B cell (primary cell): ENCODE measurements at regions of chr6 and their contacts with region 1.

Region 1: GRCh38 chr6:122839477-122839876 is 50.4 kb downstream of the SMPDL3A start:
- DNase-seq: peak; percentile 54
- ATAC-seq: peak; percentile 62
- H3K4me3 ChIP-seq: no peak overlapping the region
- H3K4me3 Mint-ChIP-seq: no peak overlapping the region
- H3K27ac ChIP-seq: no peak overlapping the region
- H3K27ac Mint-ChIP-seq: no peak overlapping the region
- H3K4me1 ChIP-seq: no peaks in the 10 kb centered on the region
- H3K4me1 Mint-ChIP-seq: no peaks in the 10 kb centered on the region
- H3K27me3 ChIP-seq: no peaks in the 10 kb centered on the region
- H3K27me3 Mint-ChIP-seq: peaks cover 16% of the 10 kb centered on the region
- CTCF ChIP-seq: peak; percentile 61

Region 2: DNA sequence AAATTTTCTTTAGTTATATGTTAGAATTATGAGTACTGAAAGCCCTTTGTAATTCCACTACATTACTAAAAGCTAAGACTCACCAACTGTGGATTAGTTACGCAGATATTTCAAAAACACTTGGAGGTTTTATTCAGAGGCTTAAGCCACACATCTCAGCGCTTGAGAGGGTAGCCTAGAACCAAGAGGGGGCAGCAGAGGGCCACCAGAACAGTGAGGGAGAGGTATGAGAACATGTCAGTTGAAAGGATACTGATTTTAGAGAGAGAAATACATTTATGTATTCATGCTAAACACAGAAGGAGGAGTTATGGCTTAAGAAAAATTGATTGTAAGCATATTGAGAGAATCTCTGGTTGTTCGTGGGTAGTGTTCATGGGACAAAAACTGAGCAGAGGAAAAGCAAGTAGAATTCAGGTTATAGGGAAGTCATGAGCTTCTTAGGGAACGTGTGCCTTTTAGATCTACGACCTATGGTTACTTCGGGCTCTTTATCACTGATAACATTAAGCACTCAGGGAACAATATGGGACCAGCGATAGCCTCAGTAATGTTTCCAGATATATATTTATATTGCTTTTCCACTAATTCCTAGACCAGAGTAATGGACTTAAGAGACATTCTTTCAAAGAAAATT is 347.4 kb before region 1 on chr6:
- CTCF ChIA-PET with region 1: interaction called, 11 read pairs
- POLR2A ChIA-PET with region 1: no interaction called
- intact Hi-C with region 1: loop called (anchors 5 kb)
- DNase-seq: peak; percentile 72
- ATAC-seq: peak; percentile 93
- H3K4me3 ChIP-seq: no peak overlapping the region
- H3K4me3 Mint-ChIP-seq: peak overlapping the region; percentile 2
- H3K27ac ChIP-seq: no peak overlapping the region
- H3K27ac Mint-ChIP-seq: no peak overlapping the region
- H3K4me1 ChIP-seq: peaks cover 5 to 10% of the 10 kb centered on the region in 2 donors
- H3K4me1 Mint-ChIP-seq: peaks cover 12% of the 10 kb centered on the region
- H3K27me3 ChIP-seq: no peaks in the 10 kb centered on the region
- H3K27me3 Mint-ChIP-seq: no peaks in the 10 kb centered on the region
- CTCF ChIP-seq: peak; percentile 97

Region 3: GRCh38 chr6:122730775-122731386 is 108.6 kb before region 1 on chr6:
- CTCF ChIA-PET with region 1: interaction called, 104 read pairs
- POLR2A ChIA-PET with region 1: no interaction called
- intact Hi-C with region 1: loop called (anchors 1 kb)
- DNase-seq: peak; percentile 30
- ATAC-seq: no peak
- H3K4me3 ChIP-seq: no peak overlapping the region
- H3K4me3 Mint-ChIP-seq: no peak overlapping the region
- H3K27ac ChIP-seq: no peak overlapping the region
- H3K27ac Mint-ChIP-seq: no peak overlapping the region
- H3K4me1 ChIP-seq: no peaks in the 10 kb centered on the region
- H3K4me1 Mint-ChIP-seq: no peaks in the 10 kb centered on the region
- H3K27me3 ChIP-seq: peaks cover 0 to 4% (median 0%) of the 10 kb centered on the region in 4 experiments
- H3K27me3 Mint-ChIP-seq: peaks cover 5% of the 10 kb centered on the region
- CTCF ChIP-seq: peak; percentile 85

Region 4: GRCh38 chr6:122736616-122737015 is 102.9 kb before region 1 on chr6:
- CTCF ChIA-PET with region 1: interaction called, 104 read pairs
- POLR2A ChIA-PET with region 1: no interaction called
- intact Hi-C with region 1: no loop called
- DNase-seq: no peak
- ATAC-seq: no peak
- H3K4me3 ChIP-seq: no peak overlapping the region
- H3K4me3 Mint-ChIP-seq: no peak overlapping the region
- H3K27ac ChIP-seq: no peak overlapping the region
- H3K27ac Mint-ChIP-seq: no peak overlapping the region
- H3K4me1 ChIP-seq: no peaks in the 10 kb centered on the region
- H3K4me1 Mint-ChIP-seq: no peaks in the 10 kb centered on the region
- H3K27me3 ChIP-seq: peaks cover 0 to 8% (median 0%) of the 10 kb centered on the region in 4 experiments
- H3K27me3 Mint-ChIP-seq: no peaks in the 10 kb centered on the region
- CTCF ChIP-seq: no peak

Region 5: DNA sequence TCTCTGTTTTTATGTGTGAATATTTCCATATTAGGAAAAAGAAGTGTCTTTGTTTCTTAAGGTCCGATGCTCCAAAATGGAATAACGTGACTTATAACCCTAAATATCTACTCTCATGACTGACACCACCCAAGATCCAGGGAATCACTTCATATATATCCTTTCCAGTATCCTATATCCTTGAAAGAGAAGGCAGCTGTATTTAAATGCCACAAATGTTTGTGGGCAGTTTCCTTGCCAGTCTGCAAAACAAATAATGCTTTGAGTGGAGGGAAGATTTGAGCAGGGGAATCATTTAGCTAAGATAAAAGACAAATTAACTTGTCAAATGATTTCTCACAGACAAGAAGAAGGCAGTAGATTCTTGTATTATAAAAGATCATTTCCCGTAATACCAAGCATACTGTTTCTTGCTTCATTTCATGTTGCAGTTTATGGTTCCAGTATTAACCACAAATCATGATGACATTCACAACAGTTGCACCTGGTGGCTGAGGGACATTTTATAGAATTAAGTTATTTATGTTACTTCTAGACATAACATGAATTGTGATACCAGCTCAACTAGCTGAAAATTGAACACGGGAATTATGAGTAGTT is 89.9 kb before region 1 on chr6:
- CTCF ChIA-PET with region 1: interaction called, 35 read pairs
- POLR2A ChIA-PET with region 1: no interaction called
- intact Hi-C with region 1: no loop called
- DNase-seq: no peak
- ATAC-seq: no peak
- H3K4me3 ChIP-seq: no peak overlapping the region
- H3K4me3 Mint-ChIP-seq: no peak overlapping the region
- H3K27ac ChIP-seq: no peak overlapping the region
- H3K27ac Mint-ChIP-seq: no peak overlapping the region
- H3K4me1 ChIP-seq: peaks cover 7 to 17% of the 10 kb centered on the region in 2 donors
- H3K4me1 Mint-ChIP-seq: peaks cover 48% of the 10 kb centered on the region
- H3K27me3 ChIP-seq: no peaks in the 10 kb centered on the region
- H3K27me3 Mint-ChIP-seq: no peaks in the 10 kb centered on the region
- CTCF ChIP-seq: no peak